ENCODE measurements at regions of chr19 and their contacts with region 1.

Region 1: DNA sequence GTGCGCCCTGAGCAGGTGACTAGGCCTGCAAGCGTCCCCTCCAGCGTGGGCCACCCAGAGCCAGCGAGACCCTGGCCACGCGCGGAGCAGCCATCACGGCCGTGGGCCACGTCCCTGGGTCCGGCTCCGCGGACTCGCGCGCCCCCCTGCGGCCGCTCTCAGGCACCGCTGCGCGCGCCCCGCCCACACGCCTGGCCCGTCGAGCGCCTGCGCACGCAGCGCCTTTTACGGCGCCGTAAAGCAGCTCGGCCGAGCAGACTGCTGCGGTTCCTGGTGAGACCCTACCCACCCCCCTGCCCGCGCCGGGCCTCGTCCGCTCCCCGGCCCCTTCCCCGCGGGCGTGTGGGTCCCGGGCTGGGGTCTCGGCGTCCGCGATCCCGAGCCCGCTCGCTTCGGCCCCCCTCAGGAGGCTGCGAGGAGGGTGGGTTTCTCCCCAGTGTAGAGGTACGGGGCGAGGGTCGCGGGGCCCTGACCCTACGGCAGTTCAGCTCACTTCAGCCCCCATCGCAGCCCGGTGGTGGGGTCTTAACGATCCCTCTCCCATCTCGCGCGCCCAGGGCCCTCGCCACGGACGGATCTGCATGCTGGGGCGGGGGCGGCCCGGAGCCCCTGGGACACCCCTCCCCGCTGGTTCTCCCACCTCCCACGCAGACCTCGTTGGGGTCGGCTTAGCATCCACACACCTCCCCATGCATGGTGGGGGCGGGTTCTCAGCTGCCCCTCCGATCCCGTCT is at the start of gene TRAPPC5:
- DNase-seq: peak; percentile 90
- CTCF ChIP-seq: peak; percentile 98

Region 2: DNA sequence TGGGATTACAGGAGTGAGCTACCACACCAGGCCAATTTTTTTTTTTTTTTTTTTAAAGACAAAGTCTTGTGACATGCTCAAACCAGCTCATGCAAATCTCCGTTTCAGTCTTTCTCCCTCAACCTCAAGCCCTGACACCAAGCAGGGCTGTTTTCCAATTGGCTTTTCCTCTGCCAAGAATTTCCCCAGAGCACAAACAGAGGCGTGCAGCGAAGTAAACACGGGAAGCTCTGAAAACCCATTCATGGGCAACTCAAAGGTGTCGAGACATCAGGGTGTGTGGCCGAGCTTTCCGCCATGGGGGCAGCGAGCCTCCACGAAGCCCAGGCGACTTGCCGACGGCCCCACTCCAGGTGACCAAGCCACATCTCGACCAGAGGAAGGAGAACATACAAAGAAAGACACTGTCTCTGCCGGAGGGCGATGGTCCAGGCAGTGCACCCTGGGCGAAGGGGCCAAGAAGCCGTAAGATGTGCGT is 456.5 kb before region 1 on chr19:
- CTCF ChIA-PET with region 1: no interaction called
- POLR2A ChIA-PET with region 1: no interaction called
- DNase-seq: no peak
- CTCF ChIP-seq: no peak

Region 3: GRCh38 chr19:7636691-7637373 is 43.9 kb before region 1 on chr19 and contains the start of gene STXBP2:
- CTCF ChIA-PET with region 1: interaction called, 12 read pairs
- POLR2A ChIA-PET with region 1: interaction called, 3 read pairs
- DNase-seq: peak; percentile 99
- CTCF ChIP-seq: no peak

Region 4: GRCh38 chr19:7658219-7658686 is 22.5 kb before region 1 on chr19:
- CTCF ChIA-PET with region 1: interaction called, 19 read pairs
- POLR2A ChIA-PET with region 1: interaction called, 3 read pairs
- DNase-seq: peak; percentile 95
- CTCF ChIP-seq: no peak

Region 5: DNA sequence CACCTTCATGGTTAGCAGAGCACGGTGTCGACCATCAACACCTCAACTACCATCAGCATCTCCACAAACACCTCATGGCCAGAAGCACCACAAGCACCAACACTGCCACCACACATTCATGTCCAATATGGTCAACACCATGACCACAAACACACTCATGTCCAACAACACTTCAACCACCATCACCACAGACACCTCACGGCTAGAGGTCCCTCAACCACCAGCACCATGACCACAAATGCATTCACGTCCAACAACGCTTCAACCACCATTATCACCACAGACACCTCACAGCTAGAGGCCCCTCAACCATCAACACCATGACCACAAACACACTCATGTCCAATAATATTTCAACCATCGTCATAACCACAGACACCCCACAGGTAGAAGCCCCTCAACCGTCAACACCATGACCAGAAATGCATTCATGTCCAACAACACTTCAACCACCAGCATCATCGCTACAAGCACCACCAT is 10.0 kb after region 1 on chr19:
- CTCF ChIA-PET with region 1: interaction called, 25 read pairs
- POLR2A ChIA-PET with region 1: interaction called, 4 read pairs
- DNase-seq: no peak
- CTCF ChIP-seq: no peak

Region 6: GRCh38 chr19:7799640-7800355 is 119.0 kb after region 1 on chr19:
- CTCF ChIA-PET with region 1: interaction called, 16 read pairs
- POLR2A ChIA-PET with region 1: no interaction called
- DNase-seq: peak; percentile 62
- CTCF ChIP-seq: peak; percentile 37

Region 7: GRCh38 chr19:7815325-7815724 is 134.6 kb after region 1 on chr19:
- CTCF ChIA-PET with region 1: interaction called, 12 read pairs
- POLR2A ChIA-PET with region 1: no interaction called
- DNase-seq: no peak
- CTCF ChIP-seq: no peak

Measured in GM10248 (cell line).